ENCODE measurements at regions of chr6 and their contacts with region 1.

Region 1: GRCh38 chr6:99425647-99426453 is 742 bp upstream of the PNISR start:
- DNase-seq: peak; percentile 83 to 92 (median 89)
- ATAC-seq: peak; percentile 83 to 87 (median 86)
- H3K4me3 ChIP-seq: peak overlapping the region; percentile 67 to 99 (median 79)
- H3K27ac ChIP-seq: peak overlapping the region; percentile 91 to 100 (median 96)
- H3K4me1 ChIP-seq: peaks cover 9 to 58% (median 52%) of the 10 kb centered on the region in 12 donors
- H3K27me3 ChIP-seq: no peaks in the 10 kb centered on the region
- CTCF ChIP-seq: peak in 9 of 12 donors; percentile 25 to 60 (median 35)
- POLR2A ChIP-seq: no peak

Region 2: DNA sequence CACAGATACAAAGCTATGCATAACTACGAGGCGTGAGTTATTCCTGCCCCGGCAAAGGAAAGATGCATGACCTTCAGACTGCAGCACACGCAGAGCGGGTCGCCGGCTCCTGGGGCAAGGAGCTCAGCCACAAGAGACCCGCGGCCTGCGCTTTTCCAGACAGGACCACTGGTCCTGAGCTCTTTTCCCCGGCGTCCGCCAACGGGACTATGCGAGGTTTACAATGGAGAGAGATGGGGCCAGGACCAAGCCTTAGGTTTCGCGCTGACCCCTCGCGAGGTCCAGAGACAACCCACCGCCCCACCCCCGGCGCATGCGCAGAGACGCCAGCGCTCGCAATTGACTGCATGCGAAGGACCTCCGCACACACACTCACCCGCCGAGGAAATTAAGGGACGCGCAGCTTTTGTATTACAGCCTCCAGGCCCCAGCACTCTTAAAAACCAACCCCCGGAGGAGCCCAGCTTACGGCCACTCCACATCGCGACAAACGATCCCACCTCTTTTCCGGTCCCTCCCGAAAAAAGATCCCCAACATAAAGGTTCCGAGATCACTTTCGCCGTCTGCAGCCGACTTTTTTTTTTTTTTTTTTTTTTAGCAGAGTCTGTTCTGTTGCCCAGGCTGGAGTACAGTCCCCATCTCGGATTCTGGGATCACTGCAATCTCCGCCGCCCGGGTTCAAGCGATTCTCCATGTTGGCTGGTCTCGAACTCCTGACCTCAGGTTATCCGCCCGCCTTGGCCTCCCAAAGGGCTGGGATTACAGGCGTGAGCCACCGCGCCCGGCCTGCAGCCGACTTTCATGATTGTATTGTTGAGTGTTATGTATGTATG is 31.9 kb before region 1 on chr6 and contains the start of gene COQ3:
- intact Hi-C with region 1: loop called in 3 of 10 experiments (anchors 2 to 5 kb)
- DNase-seq: peak; percentile 67 to 87 (median 79)
- ATAC-seq: peak; percentile 82 to 93 (median 91)
- H3K4me3 ChIP-seq: peak within 1 kb of the TSS; percentile 71 to 91 (median 82)
- H3K27ac ChIP-seq: peak within 1 kb of the TSS; percentile 75 to 90 (median 86)
- H3K4me1 ChIP-seq: peaks cover 0 to 9% (median 2%) of the 10 kb centered on the region in 12 donors
- H3K27me3 ChIP-seq: no peaks in the 10 kb centered on the region
- CTCF ChIP-seq: peak in 1 of 12 donors; percentile 12
- POLR2A ChIP-seq: peak in 1 of 2 donors; percentile 46
- total RNA-seq, gene COQ3: 9.5 to 39.1 (median 26.3) TPM

Region 3: DNA sequence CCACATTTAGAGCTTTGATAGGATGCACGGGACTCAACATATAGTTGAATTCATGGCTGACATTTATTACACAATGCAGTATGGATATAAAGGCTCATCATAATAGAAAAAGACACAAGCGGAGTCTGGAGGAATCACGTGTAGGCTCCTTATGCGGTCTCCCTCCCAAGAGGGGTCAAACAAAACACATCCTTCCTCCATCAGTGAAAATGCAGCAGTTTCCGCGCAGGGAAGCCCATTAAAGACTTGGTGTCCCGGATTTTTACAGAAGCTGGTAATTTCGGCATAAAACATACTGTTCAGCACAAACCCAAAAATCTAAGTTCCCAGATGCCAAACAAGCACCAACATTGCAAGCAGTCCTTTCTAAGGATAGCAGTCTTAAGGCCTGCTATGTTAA is 88.2 kb after region 1 on chr6:
- intact Hi-C with region 1: loop called in 3 of 10 experiments (anchors 2 to 10 kb)
- DNase-seq: no peak
- ATAC-seq: no peak
- H3K4me3 ChIP-seq: peak overlapping the region in 9 of 12 donors; percentile 65 to 97 (median 93)
- H3K27ac ChIP-seq: peak overlapping the region in 5 of 12 donors; percentile 6 to 96 (median 91)
- H3K4me1 ChIP-seq: peaks cover 0 to 22% (median 13%) of the 10 kb centered on the region in 12 donors
- H3K27me3 ChIP-seq: no peaks in the 10 kb centered on the region
- CTCF ChIP-seq: no peak
- POLR2A ChIP-seq: no peak

Region 4: DNA sequence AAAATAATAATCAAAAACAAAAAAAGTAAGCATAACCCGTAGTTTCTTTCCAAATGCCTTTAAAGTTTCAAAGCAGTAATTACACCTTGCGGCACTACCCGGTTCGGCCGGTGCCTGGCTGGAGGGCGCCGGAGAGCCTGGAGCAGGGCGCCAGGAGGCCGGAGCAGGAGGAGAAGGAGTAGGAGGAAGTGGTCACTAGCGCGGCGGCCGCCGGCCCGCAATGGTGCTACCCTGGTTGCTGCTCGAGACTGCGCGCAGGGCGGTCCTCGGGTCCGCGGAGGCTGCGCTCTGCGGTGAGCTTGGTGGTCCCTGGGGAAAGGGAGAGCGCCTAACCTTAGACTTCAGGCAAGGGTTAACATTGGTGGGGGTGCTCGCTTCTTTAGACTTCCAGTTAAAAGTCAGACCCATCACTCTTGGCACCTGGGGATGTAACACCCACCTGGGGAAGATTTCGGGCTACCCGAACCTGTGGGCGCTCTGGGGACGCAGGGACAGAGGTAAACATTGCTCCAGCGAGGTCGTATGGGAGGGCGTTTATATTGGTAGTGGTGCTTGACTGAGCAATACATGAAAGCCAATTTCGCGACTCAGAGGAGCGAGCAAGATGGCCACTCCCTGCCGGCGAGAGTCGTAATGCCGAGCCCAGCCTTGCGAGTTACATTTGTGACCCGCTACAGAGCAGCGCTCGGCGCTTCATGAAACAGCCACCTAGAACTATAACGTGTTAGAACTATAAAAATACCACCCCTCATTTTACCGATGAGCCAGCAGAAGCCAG is 95.2 kb after region 1 on chr6:
- intact Hi-C with region 1: loop called in 5 of 10 experiments (anchors 2 to 10 kb)
- DNase-seq: peak; percentile 85 to 92 (median 89)
- ATAC-seq: peak; percentile 97 to 99 (median 98)
- H3K4me3 ChIP-seq: peak overlapping the region; percentile 34 to 93 (median 76)
- H3K27ac ChIP-seq: peak overlapping the region; percentile 40 to 93 (median 90)
- H3K4me1 ChIP-seq: peaks cover 0 to 32% (median 6%) of the 10 kb centered on the region in 12 donors
- H3K27me3 ChIP-seq: no peaks in the 10 kb centered on the region
- CTCF ChIP-seq: peak; percentile 73 to 96 (median 89)
- POLR2A ChIP-seq: peak in 1 of 2 donors; percentile 89

Region 5: DNA sequence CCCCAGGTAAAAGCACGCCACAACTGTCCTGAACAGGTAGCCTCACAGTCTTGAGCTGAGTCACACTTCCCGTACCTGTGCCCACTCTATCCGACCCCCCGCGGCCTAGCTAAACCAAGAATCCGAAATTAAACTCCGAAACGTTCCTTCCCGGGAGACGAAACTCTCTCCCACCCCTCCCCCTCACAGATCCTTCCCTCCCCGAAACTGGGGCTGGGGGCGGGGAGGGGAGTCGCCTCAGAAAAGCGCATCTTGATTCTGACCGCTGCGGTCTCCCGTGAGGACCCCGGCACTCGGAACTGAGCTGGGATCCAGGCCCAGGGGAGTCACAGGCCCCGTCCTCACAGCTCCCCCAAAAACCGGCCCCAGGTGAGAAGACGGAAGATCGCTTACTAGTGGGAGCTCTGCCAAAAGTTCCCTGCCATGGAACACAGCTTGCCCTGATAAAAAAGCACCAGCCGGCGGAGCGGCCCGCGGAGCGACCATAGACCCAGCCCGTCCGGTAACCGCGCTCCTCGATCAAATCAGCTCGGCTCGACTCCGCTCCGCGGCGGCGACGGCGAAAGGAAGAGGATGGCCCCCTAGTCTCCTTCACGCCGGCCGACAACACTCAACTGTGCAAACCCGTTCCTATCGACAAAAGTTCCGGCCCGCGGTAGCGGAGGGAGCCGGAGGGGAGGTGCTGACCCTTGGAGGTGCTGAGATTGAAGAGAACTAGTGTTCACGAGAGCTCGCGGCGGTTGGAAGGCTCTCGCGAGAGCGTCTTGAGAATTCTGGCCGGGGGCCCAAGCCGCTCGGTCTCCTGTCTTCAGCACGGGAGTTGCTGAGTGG is 142.5 kb after region 1 on chr6 and contains the start of gene CCNC:
- intact Hi-C with region 1: loop called in 3 of 10 experiments (anchors 2 to 10 kb)
- DNase-seq: peak; percentile 91 to 96 (median 95)
- ATAC-seq: peak; percentile 94 to 100 (median 100)
- H3K4me3 ChIP-seq: peak within 1 kb of the TSS; percentile 49 to 96 (median 86)
- H3K27ac ChIP-seq: peak within 1 kb of the TSS; percentile 21 to 88 (median 81)
- H3K4me1 ChIP-seq: peaks cover 0 to 39% (median 19%) of the 10 kb centered on the region in 12 donors
- H3K27me3 ChIP-seq: no peaks in the 10 kb centered on the region
- CTCF ChIP-seq: peak in 1 of 12 donors; percentile 14
- POLR2A ChIP-seq: peak in 1 of 2 donors; percentile 59
- total RNA-seq, gene CCNC: 13.8 to 24.2 (median 17.9) TPM